Natural killer cell (primary cell): ENCODE measurements at regions of chr6 and their contacts with region 1.

Region 1: GRCh38 chr6:36759148-36759759 is 61.6 kb downstream of the RAB44 start:
- DNase-seq: peak; percentile 77 to 87
- ATAC-seq: peak; percentile 55 to 78 (median 60)
- H3K4me3 ChIP-seq: no peak overlapping the region
- H3K4me3 Mint-ChIP-seq: no peak overlapping the region
- H3K27ac ChIP-seq: no peak overlapping the region
- H3K27ac Mint-ChIP-seq: peak overlapping the region in 1 of 2 donors; percentile 68
- H3K4me1 ChIP-seq: peaks cover 47% of the 10 kb centered on the region
- H3K4me1 Mint-ChIP-seq: peaks cover 34 to 41% of the 10 kb centered on the region in 2 donors
- H3K27me3 ChIP-seq: no peaks in the 10 kb centered on the region
- H3K27me3 Mint-ChIP-seq: peaks cover 0 to 6% of the 10 kb centered on the region in 2 donors
- CTCF ChIP-seq: peak; percentile 98

Region 2: GRCh38 chr6:36326356-36326995 is 432.8 kb before region 1 on chr6:
- intact Hi-C with region 1: no loop called
- DNase-seq: no peak
- ATAC-seq: no peak
- H3K4me3 ChIP-seq: no peak overlapping the region
- H3K4me3 Mint-ChIP-seq: no peak overlapping the region
- H3K27ac ChIP-seq: no peak overlapping the region
- H3K27ac Mint-ChIP-seq: no peak overlapping the region
- H3K4me1 ChIP-seq: no peaks in the 10 kb centered on the region
- H3K4me1 Mint-ChIP-seq: no peaks in the 10 kb centered on the region
- H3K27me3 ChIP-seq: no peaks in the 10 kb centered on the region
- H3K27me3 Mint-ChIP-seq: peaks cover 0 to 9% of the 10 kb centered on the region in 2 donors
- CTCF ChIP-seq: no peak

Region 3: GRCh38 chr6:36615018-36615761 is 144.1 kb before region 1 on chr6:
- intact Hi-C with region 1: loop called (anchors 2 kb)
- DNase-seq: peak; percentile 34 to 80
- ATAC-seq: peak; percentile 76 to 92 (median 85)
- H3K4me3 ChIP-seq: no peak overlapping the region
- H3K4me3 Mint-ChIP-seq: no peak overlapping the region
- H3K27ac ChIP-seq: peak overlapping the region; percentile 53
- H3K27ac Mint-ChIP-seq: peak overlapping the region; percentile 74 to 88
- H3K4me1 ChIP-seq: peaks cover 14% of the 10 kb centered on the region
- H3K4me1 Mint-ChIP-seq: peaks cover 15 to 22% of the 10 kb centered on the region in 2 donors
- H3K27me3 ChIP-seq: no peaks in the 10 kb centered on the region
- H3K27me3 Mint-ChIP-seq: no peaks in the 10 kb centered on the region
- CTCF ChIP-seq: peak; percentile 75

Region 4: DNA sequence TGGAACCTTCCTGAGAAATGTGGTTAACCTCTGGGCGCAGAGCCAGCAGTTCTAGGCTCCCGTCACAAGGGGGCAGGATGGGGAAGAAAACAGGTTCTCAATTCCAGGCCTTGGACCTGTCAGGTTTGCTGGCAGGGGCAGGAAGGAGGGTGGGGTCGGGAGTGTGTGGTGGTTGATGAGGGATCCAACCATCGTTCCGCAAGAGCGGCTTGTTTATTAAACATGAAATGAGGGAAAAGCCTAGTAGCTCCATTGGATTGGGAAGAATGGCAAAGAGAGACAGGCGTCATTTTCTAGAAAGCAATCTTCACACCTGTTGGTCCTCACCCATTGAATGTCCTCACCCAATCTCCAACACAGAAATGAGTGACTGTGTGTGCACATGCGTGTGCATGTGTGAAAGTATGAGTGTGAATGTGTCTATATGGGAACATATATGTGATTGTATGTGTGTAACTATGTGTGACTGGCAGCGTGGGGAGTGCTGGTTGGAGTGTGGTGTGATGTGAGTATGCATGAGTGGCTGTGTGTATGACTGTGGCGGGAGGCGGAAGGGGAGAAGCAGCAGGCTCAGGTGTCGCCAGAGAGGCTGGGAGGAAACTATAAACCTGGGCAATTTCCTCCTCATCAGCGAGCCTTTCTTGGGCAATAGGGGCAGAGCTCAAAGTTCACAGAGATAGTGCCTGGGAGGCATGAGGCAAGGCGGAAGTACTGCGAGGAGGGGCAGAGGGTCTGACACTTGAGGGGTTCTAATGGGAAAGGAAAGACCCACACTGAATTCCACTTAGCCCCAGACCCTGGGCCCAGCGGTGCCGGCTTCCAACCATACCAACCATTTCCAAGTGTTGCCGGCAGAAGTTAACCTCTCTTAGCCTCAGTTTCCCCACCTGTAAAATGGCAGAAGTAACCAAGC is 135.5 kb before region 1 on chr6:
- intact Hi-C with region 1: loop called (anchors 2 kb)
- DNase-seq: peak; percentile 67 to 88
- ATAC-seq: peak; percentile 78 to 94 (median 94)
- H3K4me3 ChIP-seq: no peak overlapping the region
- H3K4me3 Mint-ChIP-seq: no peak overlapping the region
- H3K27ac ChIP-seq: no peak overlapping the region
- H3K27ac Mint-ChIP-seq: peak overlapping the region in 1 of 2 donors; percentile 35
- H3K4me1 ChIP-seq: peaks cover 11% of the 10 kb centered on the region
- H3K4me1 Mint-ChIP-seq: peaks cover 0 to 14% of the 10 kb centered on the region in 2 donors
- H3K27me3 ChIP-seq: no peaks in the 10 kb centered on the region
- H3K27me3 Mint-ChIP-seq: peaks cover 0 to 2% of the 10 kb centered on the region in 2 donors
- CTCF ChIP-seq: peak; percentile 86

Region 5: DNA sequence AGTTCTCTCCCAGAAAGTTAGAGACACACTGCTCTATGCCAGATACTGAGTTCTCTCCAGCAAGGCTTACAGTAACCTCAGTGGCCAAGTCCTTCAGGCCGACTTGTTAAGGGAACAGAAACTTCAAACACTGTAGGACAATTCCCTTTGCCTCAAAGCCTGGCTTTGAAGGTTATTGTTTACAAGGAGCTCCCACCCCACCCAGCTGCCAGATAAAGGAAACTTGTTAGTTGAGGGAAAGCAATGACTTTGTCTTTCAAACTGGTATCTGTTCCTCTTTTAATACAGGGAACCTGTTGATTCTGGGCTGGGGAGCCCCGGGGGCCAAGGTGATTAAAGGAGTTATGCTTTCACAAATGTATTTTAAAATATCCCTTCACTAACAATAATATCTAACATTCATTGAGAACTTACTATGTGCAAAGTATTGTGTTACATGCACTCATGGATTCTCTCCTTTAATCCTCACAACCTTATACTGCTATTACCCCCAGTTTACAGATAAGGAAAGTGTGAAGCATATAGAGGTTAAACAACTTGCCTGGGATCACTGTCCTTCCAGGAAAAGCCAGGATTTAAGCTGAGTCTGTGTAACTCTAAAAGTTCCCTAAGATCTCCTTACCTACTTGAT is 108.3 kb before region 1 on chr6:
- intact Hi-C with region 1: no loop called
- DNase-seq: no peak
- ATAC-seq: no peak
- H3K4me3 ChIP-seq: no peak overlapping the region
- H3K4me3 Mint-ChIP-seq: no peak overlapping the region
- H3K27ac ChIP-seq: no peak overlapping the region
- H3K27ac Mint-ChIP-seq: no peak overlapping the region
- H3K4me1 ChIP-seq: peaks cover 11% of the 10 kb centered on the region
- H3K4me1 Mint-ChIP-seq: no peaks in the 10 kb centered on the region
- H3K27me3 ChIP-seq: no peaks in the 10 kb centered on the region
- H3K27me3 Mint-ChIP-seq: peaks cover 13 to 23% of the 10 kb centered on the region in 2 donors
- CTCF ChIP-seq: no peak